Motor neuron (in vitro differentiated cells): ENCODE measurements at regions of chr11 and their contacts with region 1.

Region 1: GRCh38 chr11:129090056-129090455 is 102.1 kb downstream of the ARHGAP32 start:
- ATAC-seq: peak in 1 of 8 experiments; percentile 39
- H3K4me3 ChIP-seq: no peak overlapping the region
- H3K27ac ChIP-seq: no peak overlapping the region
- H3K4me1 ChIP-seq: no peaks in the 10 kb centered on the region

Region 2: GRCh38 chr11:128733440-128734102 is 356.5 kb before region 1 on chr11:
- in situ Hi-C with region 1: no loop called
- ATAC-seq: peak in 7 of 8 experiments; percentile 59 to 98 (median 97)
- H3K4me3 ChIP-seq: no peak overlapping the region
- H3K27ac ChIP-seq: no peak overlapping the region
- H3K4me1 ChIP-seq: peaks cover 15 to 21% of the 10 kb centered on the region in 2 donors

Region 3: DNA sequence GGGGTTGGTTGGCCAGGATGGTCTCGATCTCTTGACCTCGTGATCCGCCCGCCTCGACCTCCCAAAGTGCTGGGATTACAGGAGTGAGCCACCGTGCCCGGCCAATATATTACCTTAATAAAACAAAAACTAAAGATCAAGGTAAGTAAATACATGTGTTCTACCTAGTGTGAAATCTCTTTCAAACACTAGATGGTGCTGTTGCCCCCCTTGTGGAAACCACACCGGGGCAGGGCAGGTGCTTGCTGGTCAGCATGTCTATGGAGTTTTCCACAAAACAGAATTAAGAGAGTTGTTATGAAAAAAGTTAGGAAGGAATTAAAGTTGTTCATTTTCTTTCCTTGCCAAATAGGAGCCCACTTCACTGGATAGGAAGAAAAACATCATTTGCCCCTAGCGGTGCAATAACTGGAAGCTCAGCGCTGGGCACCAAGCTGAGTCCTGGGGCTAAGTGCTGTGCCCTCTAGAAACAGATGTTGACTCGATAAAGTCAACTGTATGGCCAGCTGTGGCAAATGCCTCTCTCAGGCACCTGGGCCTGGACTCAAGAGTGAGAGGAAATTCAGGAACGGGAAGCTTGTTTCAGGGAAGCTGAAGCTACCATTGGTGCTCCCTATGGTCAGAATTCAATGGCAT is 205.2 kb before region 1 on chr11:
- in situ Hi-C with region 1: loop called in 1 of 9 experiments (anchors 25 kb)
- ATAC-seq: peak; percentile 76 to 94 (median 82)
- H3K4me3 ChIP-seq: no peak overlapping the region
- H3K27ac ChIP-seq: no peak overlapping the region
- H3K4me1 ChIP-seq: peaks cover 18 to 20% of the 10 kb centered on the region in 2 donors

Region 4: GRCh38 chr11:128981254-128981653 is 108.8 kb before region 1 on chr11:
- in situ Hi-C with region 1: loop called in 1 of 9 experiments (anchors 25 kb)
- ATAC-seq: no peak
- H3K4me3 ChIP-seq: no peak overlapping the region
- H3K27ac ChIP-seq: no peak overlapping the region
- H3K4me1 ChIP-seq: no peaks in the 10 kb centered on the region